Endothelial cell of umbilical vein (primary cell): ENCODE measurements at regions of chr3 and their contacts with region 1.

Region 1: DNA sequence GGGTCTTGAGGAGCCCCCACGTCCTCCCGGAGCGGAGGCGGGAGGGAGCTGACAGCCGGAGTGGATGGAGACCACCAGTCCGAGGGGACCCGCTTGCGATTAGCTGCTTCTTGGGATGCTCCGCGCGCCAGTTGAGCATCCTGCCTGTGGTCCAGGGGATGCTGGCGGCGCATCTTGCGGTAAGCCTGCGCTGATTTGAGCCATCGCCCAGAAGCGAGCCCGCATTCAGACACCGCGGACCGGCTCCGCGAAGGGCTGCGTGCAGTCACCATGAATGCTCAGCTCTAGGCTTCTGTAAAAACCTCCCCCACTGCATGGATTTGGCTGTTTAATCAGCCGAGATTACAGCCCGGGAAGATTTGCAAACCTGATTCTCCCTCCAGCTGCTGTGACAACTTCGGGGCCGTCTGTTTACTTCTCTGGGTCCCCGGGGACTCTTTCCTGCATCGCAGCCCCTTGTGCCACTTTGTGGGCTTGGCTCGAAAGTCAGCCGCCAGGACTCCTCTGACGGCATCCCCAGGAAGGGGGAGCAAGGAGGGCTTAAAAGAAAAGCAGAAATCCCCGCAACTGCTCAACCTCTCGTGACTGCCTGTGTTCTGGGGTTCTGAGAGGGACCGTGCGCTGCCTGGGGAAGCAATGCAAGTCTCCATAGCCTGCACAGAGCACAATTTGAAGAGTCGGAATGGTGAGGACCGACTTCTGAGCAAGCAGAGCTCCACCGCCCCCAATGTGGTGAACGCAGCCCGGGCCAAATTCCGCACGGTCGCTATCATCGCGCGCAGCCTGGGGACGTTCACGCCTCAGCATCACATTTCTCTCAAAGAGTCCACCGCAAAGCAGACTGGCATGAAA is 171.1 kb downstream of the KCNAB1 start:
- DNase-seq: no peak
- H3K4me3 ChIP-seq: peak overlapping the region; percentile 12 to 21 (median 14)
- H3K27ac ChIP-seq: no peak overlapping the region
- H3K4me1 ChIP-seq: peaks cover 6% of the 10 kb centered on the region
- H3K27me3 ChIP-seq: peaks cover 8 to 16% of the 10 kb centered on the region in 2 experiments
- CTCF ChIP-seq: no peak
- POLR2A ChIP-seq: no peak

Region 2: DNA sequence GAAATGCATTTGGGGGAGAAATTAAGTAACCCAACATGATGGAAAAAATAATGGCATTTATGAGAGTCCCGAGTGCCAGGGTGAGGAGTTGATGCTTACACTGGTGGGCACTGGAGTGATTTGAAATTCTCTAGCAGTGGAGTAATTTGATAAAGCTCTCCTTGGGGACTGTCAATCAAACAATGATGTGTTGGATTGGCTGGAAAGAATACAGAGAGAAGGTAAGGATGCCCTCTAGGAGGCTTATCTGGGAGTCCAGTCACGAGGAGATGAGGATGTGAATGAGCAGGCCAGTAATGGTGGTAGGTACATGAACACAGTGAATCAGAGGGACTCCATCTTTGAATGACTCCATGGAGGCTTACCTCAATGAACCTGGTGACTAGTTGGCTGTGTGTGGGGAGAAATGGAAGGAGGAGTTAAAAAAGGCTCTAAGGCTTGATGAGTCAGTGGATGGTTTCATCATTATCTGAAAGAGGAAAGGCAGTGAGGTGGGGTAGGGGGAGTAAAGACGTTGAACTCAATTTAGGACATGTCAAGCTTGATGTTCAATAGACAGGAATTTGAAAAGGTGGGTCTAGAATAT is 110.1 kb before region 1 on chr3:
- CTCF ChIA-PET with region 1: no interaction called
- POLR2A ChIA-PET with region 1: no interaction called
- dilution Hi-C with region 1: no loop called
- intact Hi-C with region 1: loop called (anchors 5 kb)
- DNase-seq: no peak
- H3K4me3 ChIP-seq: no peak overlapping the region
- H3K27ac ChIP-seq: no peak overlapping the region
- H3K4me1 ChIP-seq: no peaks in the 10 kb centered on the region
- H3K27me3 ChIP-seq: no peaks in the 10 kb centered on the region
- CTCF ChIP-seq: no peak
- POLR2A ChIP-seq: no peak

Region 3: DNA sequence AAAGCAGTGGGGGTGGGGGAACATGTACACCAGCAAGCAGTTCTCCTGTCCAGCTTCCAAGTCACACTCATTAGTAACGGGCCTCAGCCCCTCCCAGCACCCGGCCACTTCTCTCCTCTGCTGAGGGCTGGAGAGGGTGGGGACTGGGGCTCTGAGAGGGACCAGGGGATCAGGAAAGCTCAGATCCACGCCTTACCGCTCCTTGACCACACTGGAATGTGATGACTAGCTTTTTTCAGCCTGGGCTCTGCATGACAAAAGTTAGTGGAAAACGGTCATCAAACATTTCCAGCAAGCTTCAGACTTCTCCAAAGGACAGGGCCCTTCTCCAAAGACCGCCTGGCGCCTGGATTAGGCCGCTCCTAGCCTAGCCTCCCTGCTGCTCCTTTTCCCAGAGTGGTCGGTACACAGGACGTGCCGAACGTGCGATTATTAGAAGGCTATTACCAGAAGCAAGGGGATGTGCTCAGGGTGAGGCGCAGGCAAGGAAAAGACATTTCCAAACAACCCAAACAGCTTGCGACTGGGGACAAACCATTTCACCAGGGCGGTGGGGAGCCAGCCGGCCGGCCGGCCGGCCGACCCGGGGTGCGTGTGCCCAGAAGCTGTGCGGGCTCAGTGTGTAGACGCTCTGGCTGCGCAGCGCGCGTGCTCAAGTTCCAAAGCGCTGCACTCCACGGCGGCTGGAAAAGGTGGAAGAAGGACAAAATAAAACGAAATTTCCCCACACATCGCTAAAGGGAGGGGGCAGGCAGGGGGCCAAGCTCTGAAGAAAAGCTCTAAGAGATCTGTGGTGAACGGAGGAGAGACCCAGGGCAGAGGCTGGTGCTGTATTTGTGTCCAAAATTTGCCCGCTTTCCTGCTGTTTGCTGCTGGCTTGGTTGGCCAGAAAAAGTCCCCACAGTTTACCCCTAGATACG is 314.4 kb after region 1 on chr3:
- CTCF ChIA-PET with region 1: no interaction called
- POLR2A ChIA-PET with region 1: no interaction called
- dilution Hi-C with region 1: no loop called
- intact Hi-C with region 1: no loop called
- DNase-seq: peak; percentile 34
- H3K4me3 ChIP-seq: peak overlapping the region; percentile 3 to 43 (median 37)
- H3K27ac ChIP-seq: no peak overlapping the region
- H3K4me1 ChIP-seq: no peaks in the 10 kb centered on the region
- H3K27me3 ChIP-seq: no peaks in the 10 kb centered on the region
- CTCF ChIP-seq: no peak
- POLR2A ChIP-seq: no peak

Region 4: DNA sequence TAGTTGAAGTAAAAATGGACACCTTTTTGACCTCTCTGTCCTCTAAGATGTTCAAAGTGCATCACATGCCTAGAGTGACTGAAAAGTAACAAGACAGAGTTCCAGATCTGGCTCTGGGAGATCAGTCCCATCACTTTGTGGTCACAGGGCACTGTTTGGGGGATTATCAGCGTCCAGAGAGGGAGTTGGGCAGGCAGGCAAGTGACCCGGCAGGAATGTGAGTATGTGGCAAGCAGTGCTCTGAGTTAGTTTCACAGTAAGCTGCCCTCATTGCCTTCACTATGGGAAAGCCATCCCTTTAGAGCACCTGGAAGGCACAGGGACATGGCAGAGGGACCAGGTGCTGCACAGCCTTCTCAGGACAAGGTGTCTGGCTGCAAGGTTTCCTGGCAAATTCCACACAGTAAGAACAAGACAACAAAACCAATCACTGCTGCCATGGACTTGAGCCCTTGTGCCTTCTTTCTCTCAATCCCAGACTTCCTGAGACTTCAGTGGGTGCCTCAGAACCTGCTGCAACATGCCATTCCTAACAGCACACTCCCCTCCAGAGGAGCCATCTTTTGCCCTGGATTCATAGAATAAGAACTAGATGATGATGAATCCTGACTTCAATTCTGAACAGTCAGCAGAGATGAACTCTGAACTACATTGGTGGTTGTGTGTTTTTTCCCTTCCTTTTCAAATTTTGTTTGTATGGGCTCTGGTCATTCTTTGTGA is 438.1 kb after region 1 on chr3:
- CTCF ChIA-PET with region 1: no interaction called
- POLR2A ChIA-PET with region 1: no interaction called
- dilution Hi-C with region 1: no loop called
- intact Hi-C with region 1: no loop called
- DNase-seq: no peak
- H3K4me3 ChIP-seq: no peak overlapping the region
- H3K27ac ChIP-seq: no peak overlapping the region
- H3K4me1 ChIP-seq: no peaks in the 10 kb centered on the region
- H3K27me3 ChIP-seq: no peaks in the 10 kb centered on the region
- CTCF ChIP-seq: no peak
- POLR2A ChIP-seq: no peak